ENCODE measurements at regions of chr2 and their contacts with region 1.

Region 1: DNA sequence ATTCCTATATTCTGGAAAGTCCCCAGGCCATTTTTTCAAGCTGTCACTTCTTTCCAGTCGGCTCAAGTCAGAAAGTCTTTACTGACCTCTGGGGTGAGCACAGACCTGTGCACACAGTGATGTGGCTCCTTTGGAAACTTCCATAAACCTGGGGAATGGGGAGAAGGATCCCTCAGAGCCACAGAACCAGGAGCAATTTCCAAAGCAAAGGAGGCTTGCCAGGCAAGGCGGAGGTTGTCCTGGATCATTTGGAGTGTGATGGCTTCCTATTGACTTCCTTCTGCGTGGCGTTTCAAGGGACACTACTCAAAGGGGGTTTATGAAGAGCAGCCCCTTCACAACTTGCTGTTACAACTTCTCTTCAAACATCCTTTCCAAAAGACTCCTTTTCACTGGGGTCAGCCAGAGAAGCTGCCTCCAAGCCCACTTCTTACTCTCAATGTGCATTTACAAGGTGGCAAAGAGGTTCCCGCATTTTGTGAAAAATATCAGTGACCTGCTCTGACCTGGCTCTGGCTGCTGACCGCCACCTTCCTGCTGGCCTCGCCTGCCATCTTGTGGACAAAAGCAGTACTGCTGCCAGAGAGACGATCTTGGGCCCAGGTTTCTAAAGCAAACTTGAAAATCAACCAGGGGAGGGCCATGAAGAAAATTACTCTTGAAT is 18.2 kb upstream of the TMEM247 start:
- DNase-seq: peak; percentile 81
- H3K4me3 Mint-ChIP-seq: no peak overlapping the region
- H3K27ac Mint-ChIP-seq: no peak overlapping the region
- H3K4me1 Mint-ChIP-seq: peaks cover 8% of the 10 kb centered on the region
- H3K27me3 Mint-ChIP-seq: peaks cover 6% of the 10 kb centered on the region

Region 2: DNA sequence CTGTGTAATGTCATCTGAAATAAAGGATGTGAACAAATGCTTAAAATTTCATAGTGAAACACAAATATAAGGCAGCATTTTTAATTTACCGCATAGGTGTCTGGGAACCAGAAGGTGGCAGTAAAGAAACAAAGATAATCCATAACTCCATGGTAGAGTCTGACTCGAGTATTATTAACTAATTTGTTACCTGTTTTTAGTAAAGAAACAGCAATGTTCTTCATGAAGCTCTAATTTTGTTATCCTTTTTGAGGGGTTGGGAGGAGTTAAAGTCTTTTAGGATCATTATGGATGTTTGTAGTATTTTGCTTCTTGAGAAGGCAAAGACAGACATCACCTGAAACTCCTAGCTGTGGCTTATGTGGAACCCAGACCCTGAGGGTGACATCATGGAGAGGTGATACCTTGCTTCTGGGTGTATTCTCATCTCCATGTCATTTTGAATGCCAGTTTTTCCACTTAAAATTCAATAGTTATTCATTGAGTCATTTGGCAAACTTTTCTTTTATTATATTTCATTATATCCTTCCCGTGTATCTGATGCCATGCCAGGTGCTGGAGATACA is 450.1 kb before region 1 on chr2:
- CTCF ChIA-PET with region 1: interaction called, 16 read pairs
- DNase-seq: no peak
- H3K4me3 Mint-ChIP-seq: no peak overlapping the region
- H3K27ac Mint-ChIP-seq: no peak overlapping the region
- H3K4me1 Mint-ChIP-seq: peaks cover 6% of the 10 kb centered on the region
- H3K27me3 Mint-ChIP-seq: no peaks in the 10 kb centered on the region

Region 3: DNA sequence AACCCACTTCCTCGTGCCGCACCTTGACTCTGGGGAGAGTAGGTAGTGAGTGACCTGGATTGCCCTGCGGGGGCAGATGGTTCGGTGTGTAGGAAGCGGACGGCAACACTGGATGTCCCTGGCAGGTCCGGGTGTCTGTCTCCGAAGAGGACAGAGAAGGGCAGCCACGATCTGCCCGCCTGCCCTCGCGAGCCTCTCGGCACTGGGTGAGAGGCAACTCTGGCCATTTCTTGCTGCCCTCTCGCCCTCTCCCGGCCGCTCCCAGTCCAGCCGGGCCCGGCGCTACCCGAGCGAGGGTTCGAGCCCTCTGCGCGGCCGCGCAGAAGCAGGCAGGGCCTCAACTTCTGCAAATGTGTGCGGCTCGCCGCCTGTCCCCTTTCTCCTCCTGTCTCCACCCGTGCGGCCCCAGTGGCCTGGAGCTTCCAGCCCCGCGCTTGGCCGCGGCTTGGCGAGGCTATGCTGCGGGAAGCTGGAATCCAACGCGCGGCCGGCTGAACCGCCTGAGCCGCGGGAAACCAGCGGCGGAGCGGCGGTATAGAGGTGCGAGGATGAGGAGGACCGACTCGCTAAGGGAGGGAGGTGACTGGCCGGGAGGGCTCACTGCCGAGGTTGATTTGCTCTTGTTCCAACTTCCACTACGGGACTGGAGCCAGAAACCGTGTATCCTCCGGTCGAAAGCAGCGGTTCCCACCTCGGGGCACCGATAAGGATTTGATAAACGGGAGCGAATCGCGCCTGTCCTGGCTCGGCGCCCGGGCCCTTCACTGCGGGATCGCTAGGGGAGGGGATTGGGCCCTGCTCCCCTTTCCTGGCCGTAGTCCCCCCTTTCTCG is 162.4 kb before region 1 on chr2:
- CTCF ChIA-PET with region 1: no interaction called
- DNase-seq: peak; percentile 48
- H3K4me3 Mint-ChIP-seq: peak overlapping the region; percentile 89
- H3K27ac Mint-ChIP-seq: no peak overlapping the region
- H3K4me1 Mint-ChIP-seq: peaks cover 47% of the 10 kb centered on the region
- H3K27me3 Mint-ChIP-seq: peaks cover 97% of the 10 kb centered on the region

Region 4: DNA sequence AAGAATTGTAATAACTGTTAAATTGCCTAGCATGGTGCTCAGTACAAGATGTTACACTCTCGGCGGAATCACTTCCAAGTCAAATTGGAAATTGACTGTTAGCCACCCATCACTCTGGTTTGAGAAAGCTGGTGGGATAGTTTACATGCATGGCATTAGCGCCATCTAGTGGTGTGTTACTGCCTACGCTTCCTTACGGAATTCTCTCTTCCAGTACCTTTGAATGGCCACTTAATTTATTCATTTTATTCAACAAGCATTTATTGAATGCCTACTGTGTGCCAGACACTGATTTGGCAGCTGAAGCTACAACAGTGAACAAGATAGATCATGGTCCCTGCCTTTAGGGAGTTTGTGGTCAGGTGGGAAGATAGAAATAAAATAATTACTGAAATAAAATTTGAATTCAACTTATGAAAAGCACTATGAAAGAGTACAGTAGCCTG is 189.4 kb after region 1 on chr2:
- CTCF ChIA-PET with region 1: interaction called, 10 read pairs
- DNase-seq: peak; percentile 78
- H3K4me3 Mint-ChIP-seq: no peak overlapping the region
- H3K27ac Mint-ChIP-seq: no peak overlapping the region
- H3K4me1 Mint-ChIP-seq: no peaks in the 10 kb centered on the region
- H3K27me3 Mint-ChIP-seq: peaks cover 15% of the 10 kb centered on the region